T-cell (primary cell): ENCODE measurements at regions of chr5 and their contacts with region 1.

Region 1: GRCh38 chr5:170333161-170333910 is 35.8 kb upstream of the LCP2 start:
- DNase-seq: peak in 33 of 35 experiments; percentile 25 to 81 (median 48)
- ATAC-seq: peak; percentile 34 to 63 (median 56)
- H3K4me3 ChIP-seq: peak overlapping the region in 1 of 2 donors; percentile 4
- H3K4me3 Mint-ChIP-seq: peak overlapping the region in 2 of 3 donors; percentile 74 to 75
- H3K27ac ChIP-seq: peak overlapping the region; percentile 96
- H3K27ac Mint-ChIP-seq: no peak overlapping the region
- H3K4me1 ChIP-seq: peaks cover 87 to 95% of the 10 kb centered on the region in 2 experiments
- H3K4me1 Mint-ChIP-seq: peaks cover 28 to 30% (median 30%) of the 10 kb centered on the region in 3 donors
- H3K27me3 ChIP-seq: no peaks in the 10 kb centered on the region
- H3K27me3 Mint-ChIP-seq: no peaks in the 10 kb centered on the region

Region 2: DNA sequence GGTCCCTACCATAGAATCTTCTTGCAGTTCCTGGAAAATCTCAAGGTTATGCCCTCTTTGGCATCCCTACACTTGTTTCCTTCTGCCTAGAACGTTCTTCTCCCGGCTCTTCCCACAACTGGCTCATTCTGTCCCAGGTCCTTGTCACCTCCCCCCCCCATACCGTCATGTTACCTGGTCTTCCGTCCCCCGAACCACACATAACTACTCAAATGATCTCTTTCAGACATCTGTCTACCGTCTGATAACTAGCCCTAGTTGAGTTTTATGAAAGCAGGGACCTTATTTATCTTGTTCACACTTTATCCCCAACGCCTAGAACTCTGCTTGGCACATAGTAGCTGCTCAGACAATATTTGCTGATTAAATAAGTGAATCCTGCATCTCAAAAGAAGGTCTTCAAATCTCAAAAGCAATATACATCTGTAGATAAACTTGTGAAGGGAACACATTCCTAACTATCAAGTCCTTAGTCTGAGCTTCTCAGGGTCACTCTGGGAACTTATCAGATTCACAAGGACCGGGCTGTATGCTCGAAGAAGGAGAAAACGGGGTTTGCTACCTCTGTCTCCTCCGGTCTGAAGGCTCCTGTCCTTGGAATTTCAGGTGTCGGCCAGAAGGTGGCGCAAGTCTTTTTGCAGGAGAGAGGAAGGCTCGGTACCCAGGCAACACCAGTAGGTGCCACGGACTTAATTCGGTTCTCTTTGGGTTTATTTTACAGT is 65.7 kb before region 1 on chr5:
- CTCF ChIA-PET with region 1: interaction called, 26 to 60 read pairs
- POLR2A ChIA-PET with region 1: interaction called in 1 of 2 experiments, 9 read pairs
- DNase-seq: peak; percentile 52 to 93 (median 78)
- ATAC-seq: peak; percentile 59 to 76 (median 65)
- H3K4me3 ChIP-seq: no peak overlapping the region
- H3K4me3 Mint-ChIP-seq: peak overlapping the region; percentile 58 to 77 (median 62)
- H3K27ac ChIP-seq: peak overlapping the region; percentile 80
- H3K27ac Mint-ChIP-seq: peak overlapping the region; percentile 91 to 95
- H3K4me1 ChIP-seq: peaks cover 68 to 82% of the 10 kb centered on the region in 2 experiments
- H3K4me1 Mint-ChIP-seq: peaks cover 88 to 96% (median 95%) of the 10 kb centered on the region in 3 donors
- H3K27me3 ChIP-seq: no peaks in the 10 kb centered on the region
- H3K27me3 Mint-ChIP-seq: no peaks in the 10 kb centered on the region

Region 3: GRCh38 chr5:170278611-170279452 is 54.5 kb before region 1 on chr5:
- CTCF ChIA-PET with region 1: interaction called, 11 to 34 read pairs
- POLR2A ChIA-PET with region 1: interaction called, 3 to 5 read pairs
- DNase-seq: peak; percentile 80 to 95 (median 88)
- ATAC-seq: peak; percentile 78 to 80 (median 79)
- H3K4me3 ChIP-seq: peak overlapping the region; percentile 35 to 49
- H3K4me3 Mint-ChIP-seq: peak overlapping the region; percentile 68 to 99 (median 75)
- H3K27ac ChIP-seq: peak overlapping the region; percentile 73
- H3K27ac Mint-ChIP-seq: peak overlapping the region; percentile 86 to 99
- H3K4me1 ChIP-seq: peaks cover 79 to 97% of the 10 kb centered on the region in 2 experiments
- H3K4me1 Mint-ChIP-seq: peaks cover 97 to 100% (median 97%) of the 10 kb centered on the region in 3 donors
- H3K27me3 ChIP-seq: no peaks in the 10 kb centered on the region
- H3K27me3 Mint-ChIP-seq: no peaks in the 10 kb centered on the region

Region 4: GRCh38 chr5:170293273-170293672 is 40.1 kb before region 1 on chr5:
- CTCF ChIA-PET with region 1: interaction called, 9 to 18 read pairs
- POLR2A ChIA-PET with region 1: interaction called, 7 read pairs
- DNase-seq: peak in 28 of 35 experiments; percentile 29 to 74 (median 46)
- ATAC-seq: peak; percentile 16 to 40 (median 28)
- H3K4me3 ChIP-seq: peak overlapping the region; percentile 20 to 94
- H3K4me3 Mint-ChIP-seq: peak overlapping the region; percentile 99
- H3K27ac ChIP-seq: peak overlapping the region; percentile 88
- H3K27ac Mint-ChIP-seq: peak overlapping the region; percentile 99
- H3K4me1 ChIP-seq: peaks cover 58 to 66% of the 10 kb centered on the region in 2 experiments
- H3K4me1 Mint-ChIP-seq: peaks cover 75 to 94% (median 76%) of the 10 kb centered on the region in 3 donors
- H3K27me3 ChIP-seq: no peaks in the 10 kb centered on the region
- H3K27me3 Mint-ChIP-seq: no peaks in the 10 kb centered on the region

Region 5: DNA sequence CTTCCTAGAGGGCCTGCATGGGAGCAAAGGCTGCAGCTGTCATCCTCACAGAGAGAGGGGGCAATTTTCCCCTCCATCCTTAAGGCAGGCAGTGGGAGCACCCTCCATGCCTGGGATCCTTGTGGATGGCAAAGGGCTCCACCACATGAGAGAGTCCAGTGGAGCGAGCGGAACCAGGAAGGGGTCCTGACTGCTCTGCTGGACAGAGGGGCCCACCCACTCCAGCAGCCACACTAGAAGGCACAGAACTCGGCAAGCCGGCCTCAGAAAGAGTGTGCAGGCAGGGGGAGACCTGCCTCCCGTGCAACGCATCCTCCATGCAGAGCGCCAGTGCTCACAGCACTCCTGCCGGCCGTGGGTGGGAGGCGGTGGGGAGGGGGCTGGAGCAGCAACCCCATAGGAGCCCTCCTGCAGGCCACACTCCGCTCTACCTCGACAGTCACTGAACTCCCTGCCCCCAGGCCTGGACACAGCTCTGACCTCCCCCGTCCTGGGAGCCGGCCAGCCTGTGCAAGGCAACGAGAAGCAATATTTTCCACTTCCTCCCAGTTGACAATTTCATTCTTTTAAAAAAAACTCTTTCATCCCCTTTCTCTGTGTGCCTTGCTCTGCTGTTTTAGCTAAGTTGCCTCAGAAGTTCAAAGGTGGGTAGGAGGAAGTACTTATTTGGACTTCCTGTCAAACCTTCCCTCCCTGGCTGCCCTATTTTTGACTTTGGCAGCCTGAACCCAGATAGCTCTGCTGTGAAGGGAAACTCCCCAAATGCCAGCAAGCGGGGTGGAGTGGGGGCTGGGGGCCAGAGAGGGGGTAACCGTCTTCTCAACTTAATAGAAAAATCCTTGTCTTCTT is 30.5 kb before region 1 on chr5:
- CTCF ChIA-PET with region 1: interaction called, 9 to 14 read pairs
- POLR2A ChIA-PET with region 1: interaction called, 7 read pairs
- DNase-seq: peak; percentile 43 to 96 (median 69)
- ATAC-seq: peak; percentile 91 to 98 (median 96)
- H3K4me3 ChIP-seq: peak overlapping the region; percentile 48 to 73
- H3K4me3 Mint-ChIP-seq: peak overlapping the region; percentile 78 to 99 (median 82)
- H3K27ac ChIP-seq: peak overlapping the region; percentile 95
- H3K27ac Mint-ChIP-seq: peak overlapping the region; percentile 98 to 99
- H3K4me1 ChIP-seq: peaks cover 62 to 69% of the 10 kb centered on the region in 2 experiments
- H3K4me1 Mint-ChIP-seq: peaks cover 79 to 90% (median 88%) of the 10 kb centered on the region in 3 donors
- H3K27me3 ChIP-seq: no peaks in the 10 kb centered on the region
- H3K27me3 Mint-ChIP-seq: no peaks in the 10 kb centered on the region

Region 6: DNA sequence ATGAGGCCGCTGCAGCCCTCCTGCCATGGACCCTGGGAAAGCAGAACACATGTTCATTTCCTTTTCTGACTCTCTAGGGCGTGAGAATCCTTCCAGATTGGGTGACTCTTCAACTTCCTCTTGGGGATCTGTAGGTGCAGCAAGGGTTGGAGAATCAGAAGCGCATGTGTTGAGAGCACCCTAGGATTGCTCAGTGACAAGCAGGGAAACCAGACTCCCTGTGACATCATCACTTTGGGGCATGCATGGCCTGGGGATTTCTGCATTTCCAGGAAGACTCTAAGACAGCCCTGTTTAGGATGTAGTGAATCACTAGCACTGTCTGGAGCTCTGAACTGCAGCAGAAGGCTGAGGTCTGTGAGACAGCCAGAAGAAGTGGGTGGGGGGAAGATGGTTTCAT is 20.7 kb before region 1 on chr5:
- CTCF ChIA-PET with region 1: interaction called in 1 of 2 experiments, 17 read pairs
- POLR2A ChIA-PET with region 1: interaction called, 3 to 4 read pairs
- DNase-seq: peak in 17 of 35 experiments; percentile 16 to 79 (median 39)
- ATAC-seq: peak; percentile 67 to 85 (median 78)
- H3K4me3 ChIP-seq: no peak overlapping the region
- H3K4me3 Mint-ChIP-seq: peak overlapping the region; percentile 55 to 81 (median 64)
- H3K27ac ChIP-seq: peak overlapping the region; percentile 74
- H3K27ac Mint-ChIP-seq: peak overlapping the region; percentile 94 to 97
- H3K4me1 ChIP-seq: peaks cover 37 to 48% of the 10 kb centered on the region in 2 experiments
- H3K4me1 Mint-ChIP-seq: peaks cover 56 to 69% (median 69%) of the 10 kb centered on the region in 3 donors
- H3K27me3 ChIP-seq: no peaks in the 10 kb centered on the region
- H3K27me3 Mint-ChIP-seq: no peaks in the 10 kb centered on the region

Region 7: DNA sequence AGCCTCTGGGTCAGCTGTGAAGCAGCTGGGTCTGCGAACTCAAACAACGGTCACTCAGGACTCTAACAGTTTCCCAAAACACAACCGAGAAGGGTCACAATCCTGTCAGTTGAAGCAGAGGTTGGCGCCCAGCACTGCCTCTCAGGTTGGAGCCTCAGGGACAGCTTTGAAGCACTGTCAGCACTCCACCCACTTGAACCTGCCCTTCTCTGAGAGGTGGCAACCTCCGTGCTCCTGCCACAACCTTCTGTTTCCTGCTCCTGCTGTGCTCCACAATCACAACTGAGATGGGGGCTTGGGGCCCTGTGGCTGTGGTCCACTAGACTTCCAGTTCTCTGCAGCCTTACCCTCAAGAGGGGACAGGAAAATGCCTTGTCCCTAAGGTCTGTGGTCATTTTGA is 14.0 kb before region 1 on chr5:
- CTCF ChIA-PET with region 1: interaction called, 3 to 17 read pairs
- POLR2A ChIA-PET with region 1: interaction called in 1 of 2 experiments, 4 read pairs
- DNase-seq: peak in 1 of 35 experiments; percentile 9
- ATAC-seq: peak; percentile 55 to 85 (median 76)
- H3K4me3 ChIP-seq: no peak overlapping the region
- H3K4me3 Mint-ChIP-seq: peak overlapping the region in 1 of 3 donors; percentile 38
- H3K27ac ChIP-seq: no peak overlapping the region
- H3K27ac Mint-ChIP-seq: peak overlapping the region; percentile 61 to 62
- H3K4me1 ChIP-seq: peaks cover 11 to 14% of the 10 kb centered on the region in 2 experiments
- H3K4me1 Mint-ChIP-seq: peaks cover 25 to 40% (median 40%) of the 10 kb centered on the region in 3 donors
- H3K27me3 ChIP-seq: no peaks in the 10 kb centered on the region
- H3K27me3 Mint-ChIP-seq: no peaks in the 10 kb centered on the region

Region 8: GRCh38 chr5:170353011-170353761 is 19.9 kb after region 1 on chr5:
- CTCF ChIA-PET with region 1: no interaction called
- POLR2A ChIA-PET with region 1: no interaction called
- DNase-seq: no peak
- ATAC-seq: no peak
- H3K4me3 ChIP-seq: no peak overlapping the region
- H3K4me3 Mint-ChIP-seq: no peak overlapping the region
- H3K27ac ChIP-seq: no peak overlapping the region
- H3K27ac Mint-ChIP-seq: no peak overlapping the region
- H3K4me1 ChIP-seq: peaks cover 0 to 5% of the 10 kb centered on the region in 2 experiments
- H3K4me1 Mint-ChIP-seq: peaks cover 0 to 5% (median 4%) of the 10 kb centered on the region in 3 donors
- H3K27me3 ChIP-seq: peaks cover 0 to 35% of the 10 kb centered on the region in 2 experiments
- H3K27me3 Mint-ChIP-seq: peaks cover 18 to 36% of the 10 kb centered on the region in 2 donors

Region 9: GRCh38 chr5:170372971-170373370 is 39.6 kb after region 1 on chr5:
- CTCF ChIA-PET with region 1: no interaction called
- POLR2A ChIA-PET with region 1: no interaction called
- DNase-seq: no peak
- ATAC-seq: no peak
- H3K4me3 ChIP-seq: no peak overlapping the region
- H3K4me3 Mint-ChIP-seq: no peak overlapping the region
- H3K27ac ChIP-seq: no peak overlapping the region
- H3K27ac Mint-ChIP-seq: no peak overlapping the region
- H3K4me1 ChIP-seq: no peaks in the 10 kb centered on the region
- H3K4me1 Mint-ChIP-seq: no peaks in the 10 kb centered on the region
- H3K27me3 ChIP-seq: peaks cover 0 to 4% of the 10 kb centered on the region in 2 experiments
- H3K27me3 Mint-ChIP-seq: peaks cover 0 to 2% of the 10 kb centered on the region in 2 donors